A549 (cell line): ENCODE measurements at regions of chr17 and their contacts with region 1.

Region 1: GRCh38 chr17:47889734-47890529 is 6.1 kb upstream of the SP2 start:
- DNase-seq: peak; percentile 85 to 90
- ATAC-seq: peak; percentile 95 to 98
- H3K4me3 ChIP-seq: no peak overlapping the region
- H3K27ac ChIP-seq: no peak overlapping the region
- H3K4me1 ChIP-seq: peaks cover 23% of the 10 kb centered on the region; the same call in 2 of the 3 replicates
- CTCF ChIP-seq: peak; percentile 99
- EP300 ChIP-seq: no peak
- POLR2A ChIP-seq: no peak
- RAD21 ChIP-seq: peak; percentile 100

Region 2: DNA sequence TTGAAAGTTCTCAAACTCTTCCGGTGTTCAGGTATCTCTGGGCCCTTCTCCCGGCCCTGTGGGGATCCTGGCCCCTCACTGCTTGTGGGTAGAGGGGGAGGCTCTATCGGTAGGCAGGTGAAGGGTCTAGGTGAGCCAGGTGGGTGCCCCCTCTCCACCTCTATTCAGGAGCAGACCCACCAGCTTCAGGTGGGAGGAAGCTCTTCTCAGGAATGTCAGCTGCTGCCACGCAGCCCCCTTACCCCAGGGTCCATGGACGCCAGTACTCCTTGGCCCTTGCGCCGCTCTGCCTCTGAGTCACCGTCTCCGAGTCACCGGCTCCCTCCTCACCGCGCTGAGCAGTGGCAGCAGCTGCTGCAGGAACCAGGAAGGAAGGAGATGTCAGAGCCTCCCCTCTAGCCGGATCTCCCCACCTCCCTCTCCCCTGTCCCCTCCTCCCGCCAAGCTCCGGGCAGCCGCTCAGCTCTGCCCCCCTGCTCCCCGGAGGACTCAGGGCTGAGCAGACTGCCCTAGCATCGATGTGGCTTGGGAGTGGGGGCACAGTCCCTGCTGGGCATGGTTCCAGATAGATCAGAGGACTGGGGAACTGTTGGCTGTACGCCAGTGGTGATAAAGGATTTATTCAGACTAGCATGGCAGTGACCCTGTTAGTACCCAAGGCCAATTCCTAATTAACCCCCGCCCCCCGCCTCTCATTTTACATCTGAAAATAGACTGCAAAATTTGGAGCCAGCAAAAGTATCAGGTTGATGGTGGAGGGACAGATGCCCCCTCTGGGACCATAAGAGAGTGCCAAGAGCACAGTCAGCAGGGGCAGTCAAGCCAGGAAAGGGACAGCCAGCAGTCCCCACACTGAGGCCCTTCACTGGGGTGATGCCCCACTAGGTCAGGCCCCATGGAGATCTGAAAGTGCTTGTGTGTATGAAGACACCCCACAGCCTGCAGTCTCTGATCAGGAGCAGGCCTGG is 68.2 kb before region 1 on chr17 and contains the start of gene OSBPL7:
- CTCF ChIA-PET with region 1: interaction called, 12 read pairs
- POLR2A ChIA-PET with region 1: no interaction called
- DNase-seq: peak; percentile 74 to 79
- ATAC-seq: peak; percentile 80 to 92
- H3K4me3 ChIP-seq: peak within 1 kb of the TSS; percentile 77
- H3K27ac ChIP-seq: peak within 1 kb of the TSS; percentile 77 to 85
- H3K4me1 ChIP-seq: peaks cover 21% of the 10 kb centered on the region
- CTCF ChIP-seq: peak; percentile 58
- EP300 ChIP-seq: no peak
- POLR2A ChIP-seq: peak; percentile 81
- RAD21 ChIP-seq: no peak
- polyA plus RNA-seq, gene OSBPL7: 7.0 and 7.1 TPM in 2 replicates

Region 3: DNA sequence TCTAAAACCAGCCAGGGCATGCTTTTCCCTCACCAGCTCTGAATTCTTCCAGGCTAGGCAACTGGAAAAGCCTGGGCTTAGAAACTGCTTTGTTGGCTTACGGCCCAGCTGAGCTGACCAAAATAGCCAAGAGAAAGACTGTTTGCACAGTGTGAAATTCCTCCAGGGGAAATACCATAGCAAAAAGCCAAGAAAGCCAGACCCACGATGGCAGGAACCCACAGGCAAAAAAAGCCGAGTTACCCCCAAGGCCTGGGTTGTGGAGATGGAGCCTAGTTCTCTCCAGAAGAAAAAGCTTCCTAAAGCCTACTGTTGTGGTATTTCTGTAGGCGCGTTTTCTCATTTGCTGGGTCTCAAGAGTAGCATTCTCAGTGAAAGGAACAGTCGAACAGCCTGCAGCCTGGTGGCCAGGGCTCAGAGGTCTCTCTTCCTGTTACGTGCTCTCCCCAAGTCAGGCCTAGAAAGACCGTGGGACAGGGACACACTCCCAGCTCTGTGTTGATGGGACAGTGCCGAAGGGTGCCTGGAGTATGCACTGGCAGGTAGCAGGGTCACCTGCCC is 15.4 kb after region 1 on chr17:
- CTCF ChIA-PET with region 1: interaction called, 57 read pairs
- POLR2A ChIA-PET with region 1: interaction called, 14 read pairs
- DNase-seq: no peak
- ATAC-seq: peak; percentile 49 to 61; a peak in 4 of 6 replicates
- H3K4me3 ChIP-seq: no peak overlapping the region
- H3K27ac ChIP-seq: peak overlapping the region in 1 of 2 experiments; percentile 24; a peak in 3 of 6 replicates
- H3K4me1 ChIP-seq: peaks cover 13% of the 10 kb centered on the region
- CTCF ChIP-seq: no peak
- EP300 ChIP-seq: no peak
- POLR2A ChIP-seq: no peak
- RAD21 ChIP-seq: no peak

Region 4: DNA sequence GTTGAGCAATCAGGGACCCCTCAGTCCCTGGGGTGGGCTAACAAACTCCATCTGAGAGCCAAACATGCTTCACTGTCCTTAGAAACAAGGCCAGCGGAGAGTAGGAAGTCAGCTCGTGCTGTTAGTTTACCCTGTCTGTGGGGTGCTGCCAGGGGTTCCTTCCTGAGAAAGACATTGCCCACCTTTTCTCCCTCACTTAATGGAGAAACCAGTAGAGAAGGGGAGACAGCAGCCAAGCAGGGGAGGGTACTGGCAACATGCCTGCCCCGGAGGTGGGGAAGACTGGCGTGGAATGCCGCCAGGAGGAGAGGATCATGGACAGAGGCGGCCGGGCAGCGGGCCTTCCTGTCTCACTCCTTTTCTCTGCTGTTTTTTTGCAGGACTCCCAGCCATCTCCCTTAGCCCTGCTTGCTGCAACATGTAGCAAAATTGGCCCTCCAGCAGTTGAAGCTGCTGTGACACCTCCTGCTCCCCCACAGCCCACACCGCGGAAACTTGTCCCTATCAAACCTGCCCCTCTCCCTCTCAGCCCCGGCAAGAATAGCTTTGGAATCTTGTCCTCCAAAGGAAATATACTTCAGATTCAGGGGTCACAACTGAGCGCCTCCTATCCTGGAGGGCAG is 26.0 kb after region 1 on chr17:
- CTCF ChIA-PET with region 1: interaction called, 12 read pairs
- POLR2A ChIA-PET with region 1: no interaction called
- DNase-seq: no peak
- ATAC-seq: no peak; a peak in 1 of 6 replicates
- H3K4me3 ChIP-seq: no peak overlapping the region
- H3K27ac ChIP-seq: no peak overlapping the region
- H3K4me1 ChIP-seq: 0 out of 3 replicates have a peak, but pooled peaks cover 3% of the 10 kb centered on the region
- CTCF ChIP-seq: no peak
- EP300 ChIP-seq: no peak
- POLR2A ChIP-seq: no peak
- RAD21 ChIP-seq: no peak

Region 5: GRCh38 chr17:48093341-48094045 is 203.6 kb after region 1 on chr17:
- CTCF ChIA-PET with region 1: no interaction called
- POLR2A ChIA-PET with region 1: no interaction called
- DNase-seq: no peak
- ATAC-seq: no peak
- H3K4me3 ChIP-seq: no peak overlapping the region
- H3K27ac ChIP-seq: no peak overlapping the region
- H3K4me1 ChIP-seq: peaks cover 13% of the 10 kb centered on the region; the same call in 2 of the 3 replicates
- CTCF ChIP-seq: no peak
- EP300 ChIP-seq: no peak
- POLR2A ChIP-seq: no peak
- RAD21 ChIP-seq: no peak

Region 6: DNA sequence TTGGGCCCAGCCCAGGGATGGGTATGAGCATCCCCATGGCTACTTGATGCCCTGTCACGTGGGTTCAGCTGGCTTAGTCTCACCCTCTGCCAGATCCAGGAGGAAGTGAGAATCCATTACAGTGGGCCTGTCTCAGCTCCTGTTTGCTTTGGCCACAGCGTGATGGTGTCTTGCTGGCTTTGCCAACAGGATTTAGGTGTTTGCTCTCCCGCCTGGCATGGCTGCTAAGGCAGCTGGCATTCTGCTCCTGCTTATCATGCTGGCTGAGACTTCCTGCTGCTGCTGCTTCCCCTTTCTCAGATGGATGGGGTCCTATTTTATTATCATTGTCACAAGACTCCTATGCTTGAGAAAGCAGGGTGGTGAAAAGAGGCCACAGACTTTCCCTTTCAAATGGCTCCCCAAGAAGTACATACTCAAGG is 866.9 kb after region 1 on chr17:
- CTCF ChIA-PET with region 1: no interaction called
- POLR2A ChIA-PET with region 1: no interaction called
- DNase-seq: no peak
- ATAC-seq: no peak
- H3K4me3 ChIP-seq: no peak overlapping the region
- H3K27ac ChIP-seq: no peak overlapping the region
- H3K4me1 ChIP-seq: peaks cover 40% of the 10 kb centered on the region
- CTCF ChIP-seq: no peak
- EP300 ChIP-seq: no peak
- POLR2A ChIP-seq: no peak
- RAD21 ChIP-seq: no peak